Activated CD8-positive, alpha-beta memory T cell treated with anti-CD3 and anti-CD28 coated beads, Interleukin-2, amount 10 ng/mL, durations not matched to agents 7 days and 5 days (primary cell): ENCODE measurements at regions of chr20 and their contacts with region 1.

Region 1: DNA sequence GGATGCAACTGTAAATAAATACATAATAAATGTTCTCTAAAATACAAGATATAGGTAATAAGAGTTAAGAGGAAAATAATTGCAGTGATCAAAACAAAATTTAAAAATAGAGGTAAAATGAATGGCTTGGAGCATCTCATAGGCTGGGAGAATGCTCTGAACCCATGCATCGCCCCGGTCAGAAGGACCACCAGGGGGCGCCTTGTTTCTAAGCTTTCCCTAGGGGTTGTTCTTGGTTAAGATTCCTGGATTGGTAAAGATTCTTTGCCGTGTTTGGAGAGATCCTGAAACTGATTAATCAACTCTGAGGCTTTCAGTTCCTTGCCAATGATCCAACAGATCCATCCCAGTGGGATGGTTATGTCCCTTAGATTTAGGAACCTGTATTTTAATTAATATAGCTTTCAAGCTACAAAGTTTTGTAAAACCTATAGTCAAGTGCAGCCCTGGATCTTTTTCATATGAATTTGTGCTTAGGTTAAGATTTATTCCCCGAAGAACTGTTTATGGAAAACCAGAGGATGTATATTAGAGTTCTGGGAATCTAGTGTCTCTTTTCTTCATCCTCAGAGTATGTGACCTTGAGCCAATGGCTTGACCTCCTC is 45.3 kb upstream of the PRELID3B start:
- DNase-seq: peak; percentile 87
- ATAC-seq: peak; percentile 84
- H3K4me3 Mint-ChIP-seq: no peak overlapping the region
- H3K27ac Mint-ChIP-seq: no peak overlapping the region
- H3K4me1 Mint-ChIP-seq: peaks cover 2% of the 10 kb centered on the region
- H3K27me3 Mint-ChIP-seq: peaks cover 18% of the 10 kb centered on the region

Region 2: GRCh38 chr20:59102841-59103299 is 14.9 kb after region 1 on chr20:
- CTCF ChIA-PET with region 1: interaction called, 14 read pairs
- DNase-seq: no peak
- ATAC-seq: no peak
- H3K4me3 Mint-ChIP-seq: no peak overlapping the region
- H3K27ac Mint-ChIP-seq: no peak overlapping the region
- H3K4me1 Mint-ChIP-seq: peaks cover 10% of the 10 kb centered on the region
- H3K27me3 Mint-ChIP-seq: peaks cover 12% of the 10 kb centered on the region

Region 3: GRCh38 chr20:59120491-59120890 is 32.6 kb after region 1 on chr20:
- CTCF ChIA-PET with region 1: interaction called, 24 read pairs
- DNase-seq: peak; percentile 62
- ATAC-seq: peak; percentile 18
- H3K4me3 Mint-ChIP-seq: no peak overlapping the region
- H3K27ac Mint-ChIP-seq: peak overlapping the region; percentile 47
- H3K4me1 Mint-ChIP-seq: peaks cover 53% of the 10 kb centered on the region
- H3K27me3 Mint-ChIP-seq: peaks cover 22% of the 10 kb centered on the region

Region 4: GRCh38 chr20:59149651-59150504 is 61.9 kb after region 1 on chr20:
- CTCF ChIA-PET with region 1: interaction called, 10 read pairs
- DNase-seq: peak; percentile 90
- ATAC-seq: peak; percentile 80
- H3K4me3 Mint-ChIP-seq: peak overlapping the region; percentile 21
- H3K27ac Mint-ChIP-seq: peak overlapping the region; percentile 81
- H3K4me1 Mint-ChIP-seq: peaks cover 77% of the 10 kb centered on the region
- H3K27me3 Mint-ChIP-seq: peaks cover 10% of the 10 kb centered on the region

Region 5: GRCh38 chr20:59159493-59160376 is 71.8 kb after region 1 on chr20:
- CTCF ChIA-PET with region 1: interaction called, 14 read pairs
- DNase-seq: peak; percentile 85
- ATAC-seq: peak; percentile 69
- H3K4me3 Mint-ChIP-seq: peak overlapping the region; percentile 78
- H3K27ac Mint-ChIP-seq: peak overlapping the region; percentile 98
- H3K4me1 Mint-ChIP-seq: peaks cover 59% of the 10 kb centered on the region
- H3K27me3 Mint-ChIP-seq: peaks cover 4% of the 10 kb centered on the region

Region 6: DNA sequence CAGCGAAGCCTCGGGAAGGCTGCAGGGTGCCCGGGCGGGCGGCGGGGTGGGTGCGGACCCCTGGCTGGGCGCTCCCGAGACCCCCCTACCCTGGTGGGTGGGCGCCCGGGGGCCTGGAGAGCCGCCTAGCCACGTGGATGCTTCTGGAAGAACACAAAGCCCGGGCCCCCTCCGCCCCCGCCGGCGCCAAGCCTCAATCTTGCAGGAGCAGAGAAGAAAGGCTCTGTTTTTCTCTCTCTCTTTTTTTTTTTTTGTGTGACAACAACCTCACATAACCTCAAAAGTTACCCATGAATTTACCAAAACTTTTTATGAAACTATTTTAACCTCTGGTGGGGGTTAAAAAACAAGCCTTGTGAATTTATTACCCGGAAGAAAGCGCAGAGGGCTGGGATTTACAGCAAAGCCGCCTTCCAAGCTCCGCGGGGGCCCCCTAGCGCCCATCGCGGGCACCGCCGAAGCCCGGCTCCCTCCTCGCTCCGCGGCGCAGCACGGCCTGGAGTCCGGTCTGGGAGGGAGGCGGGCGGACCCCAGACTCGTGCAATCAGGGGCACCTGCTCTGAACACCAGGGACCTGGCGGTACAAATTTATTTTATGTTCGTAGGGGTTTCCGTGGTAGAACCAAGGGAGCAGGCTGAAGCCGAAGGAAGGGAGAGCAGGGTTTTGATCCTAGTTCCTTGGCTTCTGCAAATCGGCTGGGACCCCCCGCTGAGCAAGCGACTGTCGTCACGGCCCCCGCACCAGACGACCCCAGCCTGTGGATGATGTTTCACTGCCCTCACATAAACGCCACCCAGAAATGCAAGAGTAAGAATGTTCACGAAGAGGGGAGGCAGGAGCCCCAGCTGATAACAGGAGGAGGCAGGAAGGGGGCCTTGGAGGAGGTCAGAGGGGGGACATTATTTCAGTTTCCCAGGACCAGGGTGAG is 134.6 kb after region 1 on chr20:
- CTCF ChIA-PET with region 1: interaction called, 70 read pairs
- DNase-seq: peak; percentile 82
- ATAC-seq: peak; percentile 98
- H3K4me3 Mint-ChIP-seq: peak overlapping the region; percentile 62
- H3K27ac Mint-ChIP-seq: no peak overlapping the region
- H3K4me1 Mint-ChIP-seq: peaks cover 7% of the 10 kb centered on the region
- H3K27me3 Mint-ChIP-seq: peaks cover 2% of the 10 kb centered on the region